ENCODE measurements at regions of chr4 and their contacts with region 1.

Region 1: GRCh38 chr4:173381610-173382009 is 10.9 kb downstream of the SAP30 start:
- DNase-seq: no peak
- H3K4me3 ChIP-seq: no peak overlapping the region
- H3K27ac ChIP-seq: no peak overlapping the region
- H3K4me1 ChIP-seq: peaks cover 3 to 30% (median 24%) of the 10 kb centered on the region in 4 donors
- H3K27me3 ChIP-seq: no peaks in the 10 kb centered on the region
- CTCF ChIP-seq: no peak
- EP300 ChIP-seq: no peak
- POLR2A ChIP-seq: no peak

Region 2: DNA sequence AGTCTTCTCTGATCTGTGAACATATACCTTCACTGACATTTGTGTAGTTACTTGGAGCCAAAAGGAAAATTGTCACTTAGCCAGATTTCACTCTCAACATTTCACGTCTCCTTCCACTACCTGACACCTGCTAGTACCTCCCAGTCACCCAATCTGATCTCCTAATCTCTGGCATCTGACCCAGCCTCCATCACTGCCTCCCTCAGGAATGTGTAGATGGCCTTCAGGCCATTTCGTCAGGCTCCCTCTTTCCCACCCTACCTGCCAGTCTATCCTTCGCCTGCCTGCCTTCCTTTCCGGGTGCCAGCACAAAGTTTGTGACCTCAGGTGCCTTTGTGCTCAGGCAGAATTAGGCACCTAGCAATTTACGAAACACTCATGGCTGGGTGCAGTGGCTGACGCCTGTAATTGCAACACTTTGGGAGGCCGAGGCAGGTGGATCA is 172.1 kb before region 1 on chr4:
- intact Hi-C with region 1: no loop called
- DNase-seq: no peak
- H3K4me3 ChIP-seq: no peak overlapping the region
- H3K27ac ChIP-seq: no peak overlapping the region
- H3K4me1 ChIP-seq: peaks cover 4 to 22% (median 13%) of the 10 kb centered on the region in 4 donors
- H3K27me3 ChIP-seq: no peaks in the 10 kb centered on the region
- CTCF ChIP-seq: no peak
- EP300 ChIP-seq: no peak
- POLR2A ChIP-seq: no peak

Region 3: GRCh38 chr4:173301518-173302201 is 80.0 kb before region 1 on chr4:
- intact Hi-C with region 1: no loop called
- DNase-seq: no peak
- H3K4me3 ChIP-seq: no peak overlapping the region
- H3K27ac ChIP-seq: no peak overlapping the region
- H3K4me1 ChIP-seq: peaks cover 0 to 9% (median 6%) of the 10 kb centered on the region in 4 donors
- H3K27me3 ChIP-seq: no peaks in the 10 kb centered on the region
- CTCF ChIP-seq: peak; percentile 48 to 72 (median 62)
- EP300 ChIP-seq: no peak
- POLR2A ChIP-seq: no peak

Region 4: GRCh38 chr4:173403051-173403450 is 21.4 kb after region 1 on chr4:
- intact Hi-C with region 1: loop called (anchors 2 kb)
- DNase-seq: no peak
- H3K4me3 ChIP-seq: no peak overlapping the region
- H3K27ac ChIP-seq: no peak overlapping the region
- H3K4me1 ChIP-seq: peaks cover 0 to 16% (median 15%) of the 10 kb centered on the region in 4 donors
- H3K27me3 ChIP-seq: no peaks in the 10 kb centered on the region
- CTCF ChIP-seq: no peak
- EP300 ChIP-seq: no peak
- POLR2A ChIP-seq: no peak

Measured in esophagus muscularis mucosa (tissue), 4 donors.